ENCODE measurements at regions of chr10 and their contacts with region 1.

Region 1: GRCh38 chr10:12710594-12711349 is 290.7 kb downstream of the CCDC3 start:
- DNase-seq: peak; percentile 56 to 83 (median 73)
- ATAC-seq: peak; percentile 93
- H3K4me3 ChIP-seq: no peak overlapping the region
- H3K4me3 Mint-ChIP-seq: no peak overlapping the region
- H3K27ac ChIP-seq: no peak overlapping the region
- H3K27ac Mint-ChIP-seq: no peak overlapping the region
- H3K4me1 ChIP-seq: no peaks in the 10 kb centered on the region
- H3K4me1 Mint-ChIP-seq: peaks cover 4% of the 10 kb centered on the region
- H3K27me3 ChIP-seq: no peaks in the 10 kb centered on the region
- H3K27me3 Mint-ChIP-seq: no peaks in the 10 kb centered on the region
- CTCF ChIP-seq: peak; percentile 90

Region 2: DNA sequence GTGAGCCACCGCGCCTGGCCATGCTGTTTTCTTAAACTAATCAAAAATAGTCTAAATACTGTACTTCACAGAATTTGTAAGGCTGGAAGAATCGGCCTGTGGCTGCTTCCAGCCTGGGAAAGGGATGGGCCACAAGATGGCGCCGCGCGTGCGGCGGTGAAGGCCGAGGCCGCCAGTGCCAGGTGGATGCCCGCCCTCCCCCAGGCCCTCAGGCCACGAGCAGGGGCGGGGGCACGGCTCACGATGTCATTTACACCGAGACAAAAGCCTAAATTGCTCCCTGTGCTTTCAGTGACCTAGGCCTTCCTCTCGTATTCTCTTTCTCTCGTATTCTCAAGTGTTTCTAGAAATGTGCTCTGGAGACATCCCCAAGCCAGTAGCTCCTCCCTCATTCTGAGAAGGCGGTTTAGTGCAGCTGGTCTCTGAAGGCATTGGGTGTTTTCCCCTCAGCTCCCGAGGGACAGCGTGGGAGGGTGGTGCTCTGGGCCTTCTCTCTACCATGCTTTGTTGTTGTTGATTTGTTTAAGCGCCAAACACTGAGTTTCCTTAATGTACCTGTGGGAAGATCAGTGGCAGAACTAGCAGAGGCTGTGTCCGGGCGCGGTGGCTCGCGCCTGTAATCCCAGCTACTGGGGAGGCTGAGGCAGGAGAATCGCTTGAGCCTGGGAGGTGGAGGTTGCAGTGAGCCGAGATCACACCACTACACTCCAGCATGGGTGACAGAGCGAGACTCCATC is 446.4 kb before region 1 on chr10:
- CTCF ChIA-PET with region 1: interaction called, 122 read pairs
- POLR2A ChIA-PET with region 1: interaction called, 6 read pairs
- intact Hi-C with region 1: loop called in 1 of 2 experiments (anchors 1 kb)
- DNase-seq: peak; percentile 30 to 83 (median 67)
- ATAC-seq: peak; percentile 76
- H3K4me3 ChIP-seq: peak overlapping the region; percentile 35 to 36
- H3K4me3 Mint-ChIP-seq: peak overlapping the region; percentile 72
- H3K27ac ChIP-seq: no peak overlapping the region
- H3K27ac Mint-ChIP-seq: peak overlapping the region; percentile 64
- H3K4me1 ChIP-seq: no peaks in the 10 kb centered on the region
- H3K4me1 Mint-ChIP-seq: peaks cover 14% of the 10 kb centered on the region
- H3K27me3 ChIP-seq: no peaks in the 10 kb centered on the region
- H3K27me3 Mint-ChIP-seq: no peaks in the 10 kb centered on the region
- CTCF ChIP-seq: peak; percentile 70

Region 3: GRCh38 chr10:12484941-12485805 is 225.6 kb before region 1 on chr10:
- CTCF ChIA-PET with region 1: interaction called, 3 read pairs
- POLR2A ChIA-PET with region 1: no interaction called
- intact Hi-C with region 1: loop called in 1 of 2 experiments (anchors 1 kb)
- DNase-seq: peak in 6 of 9 experiments; percentile 26 to 62 (median 44)
- ATAC-seq: peak; percentile 66
- H3K4me3 ChIP-seq: no peak overlapping the region
- H3K4me3 Mint-ChIP-seq: peak overlapping the region; percentile 60
- H3K27ac ChIP-seq: no peak overlapping the region
- H3K27ac Mint-ChIP-seq: peak overlapping the region; percentile 80
- H3K4me1 ChIP-seq: peaks cover 7% of the 10 kb centered on the region
- H3K4me1 Mint-ChIP-seq: peaks cover 37% of the 10 kb centered on the region
- H3K27me3 ChIP-seq: no peaks in the 10 kb centered on the region
- H3K27me3 Mint-ChIP-seq: no peaks in the 10 kb centered on the region
- CTCF ChIP-seq: no peak

Region 4: GRCh38 chr10:12699258-12699700 is 11.5 kb before region 1 on chr10:
- CTCF ChIA-PET with region 1: interaction called, 30 read pairs
- POLR2A ChIA-PET with region 1: no interaction called
- intact Hi-C with region 1: no loop called
- DNase-seq: no peak
- ATAC-seq: no peak
- H3K4me3 ChIP-seq: no peak overlapping the region
- H3K4me3 Mint-ChIP-seq: no peak overlapping the region
- H3K27ac ChIP-seq: no peak overlapping the region
- H3K27ac Mint-ChIP-seq: no peak overlapping the region
- H3K4me1 ChIP-seq: no peaks in the 10 kb centered on the region
- H3K4me1 Mint-ChIP-seq: no peaks in the 10 kb centered on the region
- H3K27me3 ChIP-seq: no peaks in the 10 kb centered on the region
- H3K27me3 Mint-ChIP-seq: no peaks in the 10 kb centered on the region
- CTCF ChIP-seq: no peak

Region 5: GRCh38 chr10:13684252-13684791 is 973.5 kb after region 1 on chr10:
- CTCF ChIA-PET with region 1: no interaction called
- POLR2A ChIA-PET with region 1: no interaction called
- intact Hi-C with region 1: no loop called
- DNase-seq: no peak
- ATAC-seq: no peak
- H3K4me3 ChIP-seq: no peak overlapping the region
- H3K4me3 Mint-ChIP-seq: no peak overlapping the region
- H3K27ac ChIP-seq: no peak overlapping the region
- H3K27ac Mint-ChIP-seq: no peak overlapping the region
- H3K4me1 ChIP-seq: no peaks in the 10 kb centered on the region
- H3K4me1 Mint-ChIP-seq: no peaks in the 10 kb centered on the region
- H3K27me3 ChIP-seq: no peaks in the 10 kb centered on the region
- H3K27me3 Mint-ChIP-seq: peaks cover 12% of the 10 kb centered on the region
- CTCF ChIP-seq: no peak